ENCODE measurements at regions of chr7 and their contacts with region 1.

Region 1: DNA sequence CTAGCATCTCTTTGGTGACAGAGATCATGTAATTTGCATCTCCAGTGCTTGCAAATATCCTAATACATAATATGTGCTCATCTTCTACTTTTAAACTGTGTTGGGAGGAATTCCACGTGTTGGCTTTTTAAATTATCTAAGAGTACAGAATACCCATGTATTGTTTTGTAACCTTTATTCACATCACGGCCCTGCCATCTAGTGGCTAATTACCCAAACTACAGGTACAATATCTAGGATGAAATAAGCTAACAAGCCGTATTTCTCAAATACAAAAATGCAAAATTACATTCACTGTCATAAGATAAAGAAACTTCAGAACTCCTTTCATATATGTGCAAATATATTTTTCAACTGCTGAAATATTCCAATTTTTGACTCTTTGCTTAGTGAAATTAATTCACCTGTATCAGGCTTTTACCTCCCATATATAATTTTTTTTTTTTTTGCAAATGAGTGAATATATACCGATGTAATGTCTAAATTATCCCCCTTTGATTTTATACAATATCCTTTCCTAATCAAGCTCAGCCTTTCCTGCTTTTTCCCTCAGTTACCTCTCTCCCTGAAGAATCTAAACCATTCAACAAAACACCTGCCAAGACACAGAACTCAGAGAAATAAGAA is 30.3 kb upstream of the LSM8 start:
- DNase-seq: peak; percentile 59
- H3K4me3 Mint-ChIP-seq: no peak overlapping the region
- H3K27ac Mint-ChIP-seq: no peak overlapping the region
- H3K4me1 Mint-ChIP-seq: peaks cover 10% of the 10 kb centered on the region
- H3K27me3 Mint-ChIP-seq: peaks cover 18% of the 10 kb centered on the region
- CTCF ChIP-seq: peak; percentile 72

Region 2: GRCh38 chr7:117458977-117459583 is 694.6 kb before region 1 on chr7:
- CTCF ChIA-PET with region 1: interaction called, 9 read pairs
- POLR2A ChIA-PET with region 1: no interaction called
- intact Hi-C with region 1: loop called (anchors 1 kb)
- DNase-seq: peak; percentile 35
- H3K4me3 Mint-ChIP-seq: no peak overlapping the region
- H3K27ac Mint-ChIP-seq: no peak overlapping the region
- H3K4me1 Mint-ChIP-seq: no peaks in the 10 kb centered on the region
- H3K27me3 Mint-ChIP-seq: peaks cover 24% of the 10 kb centered on the region
- CTCF ChIP-seq: peak; percentile 46

Region 3: DNA sequence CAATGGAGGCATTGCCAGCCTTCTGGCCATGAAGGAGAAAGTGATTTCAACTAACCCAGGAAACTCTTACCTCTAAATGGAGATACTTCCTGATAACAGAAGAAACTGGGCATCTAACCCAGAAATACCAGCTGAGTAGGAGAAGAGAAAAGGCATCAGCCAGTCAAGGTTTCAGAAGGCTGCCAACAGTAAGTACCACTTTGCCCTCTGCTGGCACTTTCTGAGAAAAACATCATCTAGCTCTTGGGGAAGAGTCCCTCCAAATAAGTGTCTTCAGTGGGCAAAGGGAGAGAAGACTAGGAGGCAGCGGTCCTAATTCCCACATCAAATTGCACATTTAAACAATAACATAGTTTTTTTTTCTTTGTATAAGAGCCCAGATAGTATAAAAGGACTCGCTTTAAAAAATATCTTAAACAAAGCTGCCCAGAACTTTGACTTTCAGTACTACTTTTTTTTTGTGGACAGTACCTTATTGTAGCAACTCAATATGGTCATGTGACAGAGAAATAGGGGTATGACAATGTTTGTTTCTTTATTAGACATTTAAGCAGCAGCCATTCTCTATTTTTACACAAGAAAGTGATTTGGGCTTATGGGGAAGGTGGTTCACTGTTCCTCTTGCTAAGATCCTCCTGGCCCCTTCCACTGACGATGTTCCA is 437.7 kb before region 1 on chr7:
- CTCF ChIA-PET with region 1: interaction called, 5 read pairs
- POLR2A ChIA-PET with region 1: no interaction called
- intact Hi-C with region 1: loop called (anchors 1 kb)
- DNase-seq: peak; percentile 62
- H3K4me3 Mint-ChIP-seq: no peak overlapping the region
- H3K27ac Mint-ChIP-seq: no peak overlapping the region
- H3K4me1 Mint-ChIP-seq: no peaks in the 10 kb centered on the region
- H3K27me3 Mint-ChIP-seq: peaks cover 21% of the 10 kb centered on the region
- CTCF ChIP-seq: peak; percentile 48

Region 4: DNA sequence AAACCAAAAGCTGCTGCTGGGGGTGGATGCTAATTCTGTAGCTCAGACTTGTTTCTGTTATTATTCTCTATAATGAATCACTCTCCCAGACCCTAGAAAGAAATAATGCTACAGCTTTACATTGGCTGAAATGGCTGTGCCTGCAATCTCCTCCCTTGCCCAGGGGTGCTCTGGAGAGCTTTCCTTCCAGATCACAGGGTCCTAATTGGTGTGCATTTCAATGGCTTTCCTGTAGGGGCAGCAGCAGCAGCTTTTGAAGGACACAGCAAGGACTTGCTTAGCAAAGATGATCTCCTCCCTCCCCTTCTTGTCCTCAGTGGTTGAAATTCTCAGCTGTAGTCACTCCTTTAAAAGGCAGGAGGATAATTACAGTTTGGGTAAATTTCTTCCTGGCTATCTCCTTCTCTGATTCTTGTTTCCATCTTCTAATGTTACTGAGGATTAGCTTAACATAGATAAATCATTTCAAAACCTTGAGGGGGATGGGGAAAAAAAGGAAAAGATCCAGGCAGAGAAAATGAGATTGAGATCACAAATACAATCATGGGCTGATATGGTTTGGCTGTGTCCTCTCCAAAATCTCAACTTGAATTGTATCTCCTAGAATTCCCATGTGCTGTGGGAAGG is 160.2 kb before region 1 on chr7:
- CTCF ChIA-PET with region 1: no interaction called
- POLR2A ChIA-PET with region 1: no interaction called
- intact Hi-C with region 1: loop called (anchors 2 kb)
- DNase-seq: peak; percentile 64
- H3K4me3 Mint-ChIP-seq: no peak overlapping the region
- H3K27ac Mint-ChIP-seq: no peak overlapping the region
- H3K4me1 Mint-ChIP-seq: peaks cover 23% of the 10 kb centered on the region
- H3K27me3 Mint-ChIP-seq: no peaks in the 10 kb centered on the region
- CTCF ChIP-seq: peak; percentile 38

Measured in MCF 10A (cell line).